A549 (cell line): ENCODE measurements at regions of chr7 and their contacts with region 1.

Region 1: DNA sequence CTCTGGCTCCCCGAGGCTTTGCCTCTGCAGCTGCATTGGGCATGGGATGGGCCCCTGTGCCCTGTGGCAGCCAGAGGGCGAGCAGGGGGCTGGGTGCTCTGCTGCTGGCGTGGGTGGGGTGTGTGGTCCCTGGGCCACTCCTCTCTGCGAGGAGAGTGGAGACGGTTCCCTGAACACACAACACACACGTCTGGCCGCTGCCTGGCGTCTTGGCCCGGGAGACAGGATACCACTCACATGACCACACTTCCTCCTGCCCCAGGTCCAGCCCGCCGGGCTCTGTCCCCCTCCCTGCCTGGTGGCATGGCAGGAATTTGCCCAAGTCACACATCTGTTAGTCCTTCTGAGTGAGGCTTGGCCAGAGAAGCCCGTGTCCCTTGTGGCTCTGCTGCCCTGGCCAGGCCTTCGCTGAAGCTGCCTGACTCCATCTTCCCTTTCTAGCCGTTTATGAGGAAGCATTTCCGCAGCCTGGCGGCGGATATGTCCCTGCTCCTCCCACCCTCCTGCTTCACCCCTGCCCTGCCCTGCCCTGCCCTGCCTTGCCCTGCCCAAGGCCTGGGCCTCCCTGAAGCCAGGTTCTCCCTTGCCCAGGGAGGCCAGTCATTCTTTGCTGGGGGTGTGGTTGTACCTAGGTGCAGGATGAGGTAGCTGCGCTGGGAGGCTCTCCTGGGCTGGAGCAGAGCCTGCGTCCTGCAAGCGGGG is 3.0 kb downstream of the BRI3 start:
- DNase-seq: peak in 1 of 2 experiments; percentile 65
- ATAC-seq: peak in 1 of 2 experiments; percentile 37; a peak in 3 of 6 replicates
- H3K4me3 ChIP-seq: peak overlapping the region; percentile 98
- H3K27ac ChIP-seq: peak overlapping the region; percentile 98 to 99
- H3K4me1 ChIP-seq: peaks cover 64% of the 10 kb centered on the region
- CTCF ChIP-seq: no peak
- EP300 ChIP-seq: no peak
- POLR2A ChIP-seq: no peak
- RAD21 ChIP-seq: no peak

Region 2: GRCh38 chr7:98294796-98295382 is 10.4 kb after region 1 on chr7:
- CTCF ChIA-PET with region 1: interaction called, 20 read pairs
- POLR2A ChIA-PET with region 1: no interaction called
- DNase-seq: peak; percentile 75 to 85
- ATAC-seq: peak; percentile 82 to 90
- H3K4me3 ChIP-seq: no peak overlapping the region
- H3K27ac ChIP-seq: peak overlapping the region; percentile 40 to 81
- H3K4me1 ChIP-seq: peaks cover 13% of the 10 kb centered on the region
- CTCF ChIP-seq: peak; percentile 90
- EP300 ChIP-seq: no peak
- POLR2A ChIP-seq: no peak
- RAD21 ChIP-seq: peak; percentile 93 to 96

Region 3: DNA sequence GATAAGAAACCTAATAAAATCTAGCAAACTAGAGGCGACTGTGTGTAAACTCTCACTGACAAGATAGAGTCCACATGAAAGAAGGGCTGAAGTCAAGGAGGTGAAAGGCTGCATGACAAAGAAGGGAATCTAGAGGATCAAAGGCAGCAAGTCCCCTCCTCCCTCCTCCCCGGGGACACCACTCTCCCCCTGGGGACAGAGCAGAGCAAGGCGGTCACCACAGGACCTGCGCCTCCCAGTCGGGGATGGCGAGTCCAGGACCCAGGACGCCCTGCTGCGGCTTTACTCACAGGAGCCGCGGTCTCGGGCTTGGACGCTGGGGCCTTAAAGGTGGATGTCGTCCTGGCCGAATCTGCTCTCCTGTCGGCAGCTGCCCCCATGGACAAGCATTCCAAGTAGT is 19.4 kb after region 1 on chr7:
- CTCF ChIA-PET with region 1: interaction called, 10 read pairs
- POLR2A ChIA-PET with region 1: no interaction called
- DNase-seq: no peak
- ATAC-seq: no peak
- H3K4me3 ChIP-seq: no peak overlapping the region
- H3K27ac ChIP-seq: no peak overlapping the region
- H3K4me1 ChIP-seq: no peaks in the 10 kb centered on the region
- CTCF ChIP-seq: no peak
- EP300 ChIP-seq: no peak
- POLR2A ChIP-seq: no peak
- RAD21 ChIP-seq: no peak